ENCODE measurements at regions of chr10 and their contacts with region 1.

Region 1: GRCh38 chr10:61896854-61897661 is 4.4 kb upstream of the ARID5B start:
- DNase-seq: peak; percentile 80 to 89
- ATAC-seq: peak; percentile 79 to 88
- H3K4me3 ChIP-seq: peak overlapping the region; percentile 13; the same call in 1 of the 3 replicates
- H3K27ac ChIP-seq: peak overlapping the region in 1 of 2 experiments; percentile 46; a peak in 1 of 6 replicates
- H3K4me1 ChIP-seq: peaks cover 32% of the 10 kb centered on the region; the same call in 2 of the 3 replicates
- CTCF ChIP-seq: peak; percentile 58
- EP300 ChIP-seq: no peak
- POLR2A ChIP-seq: no peak
- RAD21 ChIP-seq: peak; percentile 52 to 58

Region 2: GRCh38 chr10:61688551-61689308 is 208.3 kb before region 1 on chr10:
- CTCF ChIA-PET with region 1: no interaction called
- POLR2A ChIA-PET with region 1: no interaction called
- DNase-seq: no peak
- ATAC-seq: no peak
- H3K4me3 ChIP-seq: no peak overlapping the region
- H3K27ac ChIP-seq: no peak overlapping the region
- H3K4me1 ChIP-seq: no peaks in the 10 kb centered on the region
- CTCF ChIP-seq: no peak
- EP300 ChIP-seq: no peak
- POLR2A ChIP-seq: no peak
- RAD21 ChIP-seq: no peak

Region 3: GRCh38 chr10:61871487-61871886 is 25.6 kb before region 1 on chr10:
- CTCF ChIA-PET with region 1: interaction called, 13 read pairs
- POLR2A ChIA-PET with region 1: no interaction called
- DNase-seq: no peak
- ATAC-seq: no peak
- H3K4me3 ChIP-seq: no peak overlapping the region
- H3K27ac ChIP-seq: no peak overlapping the region
- H3K4me1 ChIP-seq: no peaks in the 10 kb centered on the region
- CTCF ChIP-seq: no peak
- EP300 ChIP-seq: no peak
- POLR2A ChIP-seq: no peak
- RAD21 ChIP-seq: no peak

Region 4: GRCh38 chr10:61882621-61883373 is 14.3 kb before region 1 on chr10:
- CTCF ChIA-PET with region 1: interaction called, 13 read pairs
- POLR2A ChIA-PET with region 1: no interaction called
- DNase-seq: no peak
- ATAC-seq: no peak
- H3K4me3 ChIP-seq: no peak overlapping the region
- H3K27ac ChIP-seq: no peak overlapping the region
- H3K4me1 ChIP-seq: no peaks in the 10 kb centered on the region
- CTCF ChIP-seq: no peak
- EP300 ChIP-seq: no peak
- POLR2A ChIP-seq: no peak
- RAD21 ChIP-seq: no peak

Measured in A549 (cell line).